Heart right ventricle (tissue), 16 donors: ENCODE measurements at regions of chr12 and their contacts with region 1.

Region 1: GRCh38 chr12:98483621-98484503 is 31.5 kb upstream of the TMPO start:
- DNase-seq: no peak
- ATAC-seq: no peak
- H3K4me3 ChIP-seq: no peak overlapping the region
- H3K27ac ChIP-seq: no peak overlapping the region
- H3K4me1 ChIP-seq: no peaks in the 10 kb centered on the region
- H3K27me3 ChIP-seq: no peaks in the 10 kb centered on the region
- CTCF ChIP-seq: no peak

Region 2: DNA sequence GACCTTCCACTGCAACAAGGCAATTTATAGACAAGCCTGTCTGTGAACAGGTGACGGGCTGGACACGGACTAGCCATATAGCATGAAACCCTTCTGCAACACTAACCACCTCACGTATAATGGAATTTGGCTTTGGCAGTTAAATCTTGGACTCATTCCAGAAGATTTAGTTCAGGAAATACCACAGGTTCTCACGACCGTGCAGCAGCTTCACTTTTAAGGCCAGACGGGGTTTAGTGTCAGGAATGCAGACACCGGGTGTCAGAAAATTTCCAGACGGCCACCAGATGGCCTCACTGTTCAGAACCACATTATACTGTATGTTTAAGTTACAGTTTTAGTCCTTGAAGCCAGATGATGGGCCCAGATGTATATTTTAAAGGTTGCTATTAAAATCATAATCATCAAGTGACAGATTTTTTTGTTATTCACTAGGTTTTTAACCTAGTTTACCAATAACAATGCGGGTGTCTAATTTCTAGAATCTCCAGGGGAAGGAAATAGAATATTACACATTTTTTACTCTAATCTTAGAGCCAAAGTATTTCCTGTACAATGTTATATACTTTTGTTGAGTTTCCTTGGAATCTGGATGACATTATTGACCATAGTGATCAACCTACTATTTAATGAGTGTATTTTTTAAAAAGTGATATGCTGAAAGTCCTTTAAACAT is 59.0 kb before region 1 on chr12:
- intact Hi-C with region 1: loop called in 1 of 10 experiments (anchors 10 kb)
- DNase-seq: peak; percentile 39 to 40
- ATAC-seq: peak in 7 of 8 donors; percentile 52 to 81 (median 77)
- H3K4me3 ChIP-seq: no peak overlapping the region
- H3K27ac ChIP-seq: peak overlapping the region in 2 of 10 donors; percentile 5 to 9
- H3K4me1 ChIP-seq: peaks cover 0 to 14% (median 4%) of the 10 kb centered on the region in 9 donors
- H3K27me3 ChIP-seq: no peaks in the 10 kb centered on the region
- CTCF ChIP-seq: peak; percentile 39 to 81 (median 70)

Region 3: GRCh38 chr12:98470469-98471082 is 13.3 kb before region 1 on chr12:
- intact Hi-C with region 1: no loop called
- DNase-seq: no peak
- ATAC-seq: peak in 1 of 8 donors; percentile 19
- H3K4me3 ChIP-seq: no peak overlapping the region
- H3K27ac ChIP-seq: peak overlapping the region in 1 of 10 donors; percentile 7
- H3K4me1 ChIP-seq: peaks cover 0 to 25% (median 9%) of the 10 kb centered on the region in 9 donors
- H3K27me3 ChIP-seq: no peaks in the 10 kb centered on the region
- CTCF ChIP-seq: no peak

Region 4: DNA sequence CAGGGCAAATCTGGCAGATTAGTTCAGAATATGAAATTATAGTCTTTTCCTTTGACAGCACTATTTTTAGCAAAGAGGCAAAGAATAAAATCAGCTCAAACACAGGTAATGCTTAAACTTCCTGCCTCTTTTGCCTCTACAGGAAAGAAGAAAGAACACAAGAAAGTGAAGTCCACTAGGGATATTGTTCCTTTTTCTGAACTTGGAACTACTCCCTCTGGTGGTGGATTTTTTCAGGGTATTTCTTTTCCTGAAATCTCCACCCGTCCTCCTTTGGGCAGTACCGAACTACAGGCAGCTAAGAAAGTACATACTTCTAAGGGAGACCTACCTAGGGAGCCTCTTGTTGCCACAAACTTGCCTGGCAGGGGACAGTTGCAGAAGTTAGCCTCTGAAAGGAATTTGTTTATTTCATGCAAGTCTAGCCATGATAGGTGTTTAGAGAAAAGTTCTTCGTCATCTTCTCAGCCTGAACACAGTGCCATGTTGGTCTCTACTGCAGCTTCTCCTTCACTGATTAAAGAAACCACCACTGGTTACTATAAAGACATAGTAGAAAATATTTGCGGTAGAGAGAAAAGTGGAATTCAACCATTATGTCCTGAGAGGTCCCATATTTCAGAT is 48.9 kb after region 1 on chr12:
- intact Hi-C with region 1: loop called in 1 of 10 experiments (anchors 5 kb)
- DNase-seq: no peak
- ATAC-seq: no peak
- H3K4me3 ChIP-seq: no peak overlapping the region
- H3K27ac ChIP-seq: no peak overlapping the region
- H3K4me1 ChIP-seq: no peaks in the 10 kb centered on the region
- H3K27me3 ChIP-seq: no peaks in the 10 kb centered on the region
- CTCF ChIP-seq: peak in 8 of 9 donors; percentile 52 to 66 (median 56)

Region 5: DNA sequence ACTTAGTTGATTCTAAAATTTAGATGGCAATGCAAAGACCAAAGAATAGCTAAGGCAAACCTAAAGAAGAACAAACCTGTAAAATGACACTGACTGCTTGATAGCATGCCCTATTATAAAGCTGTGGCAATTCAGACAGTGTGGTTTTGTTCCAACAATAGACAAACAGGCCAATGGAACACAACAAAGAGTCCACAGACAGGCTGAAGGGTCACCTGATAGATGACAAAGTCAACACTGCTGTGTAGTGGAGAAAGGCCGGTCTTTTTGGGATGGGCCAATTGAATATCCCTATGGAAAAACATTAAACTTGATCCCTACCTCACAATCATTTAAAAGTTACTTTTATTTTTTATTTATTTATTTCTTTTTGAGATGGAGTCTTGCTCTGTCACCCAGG is 75.8 kb after region 1 on chr12:
- intact Hi-C with region 1: no loop called
- DNase-seq: no peak
- ATAC-seq: no peak
- H3K4me3 ChIP-seq: no peak overlapping the region
- H3K27ac ChIP-seq: no peak overlapping the region
- H3K4me1 ChIP-seq: no peaks in the 10 kb centered on the region
- H3K27me3 ChIP-seq: no peaks in the 10 kb centered on the region
- CTCF ChIP-seq: no peak

Region 6: DNA sequence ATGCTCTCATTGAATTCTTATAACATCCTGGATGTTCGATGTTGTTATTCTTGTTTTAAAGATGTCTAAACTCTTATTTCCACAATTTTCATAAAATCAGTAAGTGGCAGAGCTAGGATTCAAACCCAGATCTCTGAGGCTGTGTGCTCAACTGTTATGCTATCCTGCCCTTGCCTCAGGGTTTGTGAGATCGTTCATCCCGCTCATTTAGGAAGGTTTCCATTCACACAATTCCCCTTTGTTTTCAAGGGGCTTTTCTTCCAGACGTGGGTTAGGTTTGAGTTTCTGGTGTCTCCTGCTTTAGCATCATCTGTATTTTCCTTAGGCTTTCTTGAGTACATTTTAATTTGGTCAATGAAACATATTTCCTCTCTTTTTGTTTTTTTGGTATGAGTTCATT is 230.6 kb after region 1 on chr12:
- intact Hi-C with region 1: no loop called
- DNase-seq: no peak
- ATAC-seq: no peak
- H3K4me3 ChIP-seq: no peak overlapping the region
- H3K27ac ChIP-seq: no peak overlapping the region
- H3K4me1 ChIP-seq: no peaks in the 10 kb centered on the region
- H3K27me3 ChIP-seq: no peaks in the 10 kb centered on the region
- CTCF ChIP-seq: no peak